ENCODE measurements at regions of chr12 and their contacts with region 1.

Region 1: GRCh38 chr12:6167327-6168259 is 32.6 kb upstream of the CD9 start:
- DNase-seq: peak; percentile 79
- H3K4me3 Mint-ChIP-seq: peak overlapping the region; percentile 26
- H3K27ac Mint-ChIP-seq: peak overlapping the region; percentile 72
- H3K4me1 Mint-ChIP-seq: peaks cover 30% of the 10 kb centered on the region
- H3K27me3 Mint-ChIP-seq: no peaks in the 10 kb centered on the region

Region 2: DNA sequence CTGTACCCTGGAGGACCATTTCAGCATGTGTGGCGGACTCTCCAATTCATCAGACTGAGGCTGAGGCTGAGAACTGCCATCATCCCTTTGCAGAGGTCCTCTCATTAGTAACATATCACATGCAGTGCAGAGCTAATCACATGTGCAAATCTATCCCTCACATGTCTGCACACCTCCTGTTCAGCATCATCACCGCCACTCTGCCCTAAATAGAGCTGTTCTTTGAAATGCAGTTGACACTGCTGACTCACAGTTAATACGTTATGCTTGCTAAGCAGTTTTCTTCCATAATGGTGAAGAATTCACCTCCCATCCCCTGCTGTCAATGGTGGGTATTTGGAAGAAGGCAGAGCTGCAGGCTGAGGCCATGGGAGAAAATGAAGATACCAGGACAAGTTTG is 137.5 kb before region 1 on chr12:
- CTCF ChIA-PET with region 1: no interaction called
- intact Hi-C with region 1: no loop called
- DNase-seq: no peak
- H3K4me3 Mint-ChIP-seq: no peak overlapping the region
- H3K27ac Mint-ChIP-seq: no peak overlapping the region
- H3K4me1 Mint-ChIP-seq: no peaks in the 10 kb centered on the region
- H3K27me3 Mint-ChIP-seq: peaks cover 2% of the 10 kb centered on the region

Region 3: GRCh38 chr12:6056406-6057240 is 111.0 kb before region 1 on chr12:
- CTCF ChIA-PET with region 1: interaction called, 11 read pairs
- intact Hi-C with region 1: no loop called
- DNase-seq: peak; percentile 26
- H3K4me3 Mint-ChIP-seq: no peak overlapping the region
- H3K27ac Mint-ChIP-seq: no peak overlapping the region
- H3K4me1 Mint-ChIP-seq: no peaks in the 10 kb centered on the region
- H3K27me3 Mint-ChIP-seq: peaks cover 7% of the 10 kb centered on the region

Region 4: GRCh38 chr12:6140651-6141447 is 26.7 kb before region 1 on chr12:
- CTCF ChIA-PET with region 1: interaction called, 4 read pairs
- intact Hi-C with region 1: loop called (anchors 1 kb)
- DNase-seq: peak; percentile 63
- H3K4me3 Mint-ChIP-seq: peak overlapping the region; percentile 47
- H3K27ac Mint-ChIP-seq: peak overlapping the region; percentile 94
- H3K4me1 Mint-ChIP-seq: peaks cover 48% of the 10 kb centered on the region
- H3K27me3 Mint-ChIP-seq: no peaks in the 10 kb centered on the region

Region 5: DNA sequence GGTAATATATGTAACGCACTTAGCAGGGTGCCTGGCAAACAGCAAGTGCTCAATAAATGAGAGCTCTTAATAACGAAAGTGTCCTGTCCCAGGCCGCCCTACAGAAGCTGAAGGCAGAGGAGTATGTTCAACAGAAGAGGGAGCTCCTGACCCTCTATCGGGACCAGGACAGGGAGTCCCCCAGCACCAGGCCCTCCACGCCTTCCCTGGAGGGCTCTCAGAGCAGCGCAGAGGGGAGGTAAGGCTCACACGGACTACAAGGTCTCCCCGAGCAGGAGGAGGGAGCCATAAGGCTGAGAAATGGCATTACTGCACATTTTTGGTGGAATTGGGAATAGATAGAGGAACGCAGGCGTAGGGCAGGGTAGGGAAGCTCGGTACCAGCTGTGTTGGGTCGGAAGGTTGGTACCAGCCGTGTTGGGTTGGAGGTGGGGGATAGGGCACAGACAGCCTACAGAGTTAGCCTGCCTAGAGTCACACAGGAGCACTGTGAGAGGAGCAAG is 158.8 kb after region 1 on chr12:
- CTCF ChIA-PET with region 1: no interaction called
- intact Hi-C with region 1: no loop called
- DNase-seq: peak; percentile 47
- H3K4me3 Mint-ChIP-seq: no peak overlapping the region
- H3K27ac Mint-ChIP-seq: peak overlapping the region; percentile 70
- H3K4me1 Mint-ChIP-seq: peaks cover 38% of the 10 kb centered on the region
- H3K27me3 Mint-ChIP-seq: no peaks in the 10 kb centered on the region

Region 6: DNA sequence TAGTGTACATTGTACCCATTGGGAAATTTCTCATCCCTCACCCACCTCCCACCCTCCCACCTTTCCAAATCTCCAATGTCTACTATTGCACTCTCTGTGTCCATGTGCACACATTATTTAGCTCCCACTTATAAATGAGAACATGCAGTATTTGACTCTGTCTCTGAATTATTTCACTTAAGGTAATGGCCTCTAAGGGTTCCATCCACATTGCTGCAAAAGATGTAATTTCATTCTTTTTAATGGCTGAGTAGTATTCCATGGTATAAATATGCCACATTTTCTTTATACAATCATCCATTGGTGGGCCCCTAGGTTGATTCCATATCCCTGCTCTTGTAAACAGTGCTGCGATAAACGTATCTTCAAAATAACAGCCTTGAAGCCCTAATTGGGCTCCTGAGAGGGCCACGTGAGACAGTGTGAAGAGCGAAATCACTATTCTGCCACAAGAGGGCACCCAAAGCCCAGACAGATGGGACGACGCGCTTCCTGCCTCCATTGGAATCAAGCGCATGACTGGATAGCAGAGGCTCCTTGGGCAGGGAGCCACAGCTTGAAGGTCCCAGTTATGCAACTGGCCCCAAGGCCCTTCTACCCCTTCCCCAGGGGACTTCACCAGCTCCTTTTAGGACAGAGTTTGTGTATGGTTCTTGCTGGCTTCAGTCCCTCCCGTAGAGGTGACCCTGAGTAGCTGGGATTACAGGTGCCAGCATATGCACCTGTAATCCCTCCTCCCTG is 255.8 kb after region 1 on chr12:
- CTCF ChIA-PET with region 1: no interaction called
- intact Hi-C with region 1: no loop called
- DNase-seq: peak; percentile 88
- H3K4me3 Mint-ChIP-seq: peak overlapping the region; percentile 52
- H3K27ac Mint-ChIP-seq: peak overlapping the region; percentile 51
- H3K4me1 Mint-ChIP-seq: peaks cover 48% of the 10 kb centered on the region
- H3K27me3 Mint-ChIP-seq: no peaks in the 10 kb centered on the region

Measured in activated naive CD4-positive, alpha-beta T cell treated with anti-CD3 and anti-CD28 coated beads for 36 hours (primary cell).